ENCODE measurements at regions of chr15 and their contacts with region 1.

Region 1: GRCh38 chr15:94306700-94307650 is 75.6 kb downstream of the MCTP2 start:
- DNase-seq: peak; percentile 79

Region 2: DNA sequence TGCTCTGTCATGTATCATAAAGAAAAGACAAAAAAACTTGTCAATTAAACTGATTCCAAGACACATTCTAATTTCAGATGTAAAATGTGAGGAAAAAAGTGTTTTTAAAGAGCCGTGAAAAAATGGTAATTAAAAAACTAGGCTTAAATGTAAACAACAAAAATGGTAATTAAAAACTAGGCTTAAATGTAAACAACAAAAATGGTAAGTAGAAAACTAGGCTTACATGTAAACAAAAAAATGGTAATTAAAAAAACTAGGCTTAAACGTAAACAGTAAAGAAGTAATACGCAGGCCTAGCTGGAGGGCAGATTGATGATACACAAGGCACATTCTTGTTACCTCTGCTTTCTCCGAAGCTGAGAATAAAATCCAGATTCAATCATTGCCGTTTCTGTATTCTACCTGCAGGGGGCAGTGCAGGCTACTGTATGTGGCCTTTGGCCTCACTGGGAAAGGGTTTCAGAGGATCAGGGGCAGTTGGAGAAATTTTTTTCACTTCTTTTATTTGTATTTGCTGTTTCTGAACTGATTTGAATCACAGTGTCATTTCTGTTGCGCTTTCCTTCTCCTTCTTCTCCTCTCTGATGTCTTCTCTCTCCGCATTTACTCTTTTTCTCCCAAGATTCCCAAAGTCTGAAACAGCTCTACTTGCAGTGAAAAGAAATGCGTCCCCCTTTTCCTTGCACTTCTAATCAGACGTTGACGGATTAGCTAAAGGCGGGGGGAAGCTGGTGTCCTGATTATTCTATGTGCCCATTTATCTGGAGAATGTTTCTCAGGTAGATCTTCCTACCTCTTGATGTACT is 142.8 kb before region 1 on chr15:
- in situ Hi-C with region 1: loop called (anchors 10 kb)
- DNase-seq: peak; percentile 84